Activated CD4-positive, alpha-beta T cell treated with anti-CD3 and anti-CD28 coated beads for 36 hours (primary cell): ENCODE measurements at regions of chr12 and their contacts with region 1.

Region 1: GRCh38 chr12:89949457-89950195 is 241.0 kb upstream of the ATP2B1 start:
- DNase-seq: peak; percentile 51
- ATAC-seq: peak; percentile 82
- H3K4me3 Mint-ChIP-seq: no peak overlapping the region
- H3K27ac Mint-ChIP-seq: peak overlapping the region; percentile 64
- H3K4me1 Mint-ChIP-seq: peaks cover 50% of the 10 kb centered on the region
- H3K27me3 Mint-ChIP-seq: no peaks in the 10 kb centered on the region

Region 2: GRCh38 chr12:88241862-88242570 is 1707.6 kb before region 1 on chr12:
- CTCF ChIA-PET with region 1: no interaction called
- POLR2A ChIA-PET with region 1: no interaction called
- intact Hi-C with region 1: loop called in 1 of 2 experiments (anchors 5 kb)
- DNase-seq: peak; percentile 57
- ATAC-seq: peak; percentile 95
- H3K4me3 Mint-ChIP-seq: no peak overlapping the region
- H3K27ac Mint-ChIP-seq: peak overlapping the region; percentile 91
- H3K4me1 Mint-ChIP-seq: peaks cover 36% of the 10 kb centered on the region
- H3K27me3 Mint-ChIP-seq: peaks cover 13% of the 10 kb centered on the region

Region 3: GRCh38 chr12:89280833-89281538 is 668.6 kb before region 1 on chr12:
- CTCF ChIA-PET with region 1: no interaction called
- POLR2A ChIA-PET with region 1: no interaction called
- intact Hi-C with region 1: no loop called
- DNase-seq: no peak
- ATAC-seq: peak; percentile 55
- H3K4me3 Mint-ChIP-seq: no peak overlapping the region
- H3K27ac Mint-ChIP-seq: peak overlapping the region; percentile 88
- H3K4me1 Mint-ChIP-seq: peaks cover 33% of the 10 kb centered on the region
- H3K27me3 Mint-ChIP-seq: no peaks in the 10 kb centered on the region

Region 4: DNA sequence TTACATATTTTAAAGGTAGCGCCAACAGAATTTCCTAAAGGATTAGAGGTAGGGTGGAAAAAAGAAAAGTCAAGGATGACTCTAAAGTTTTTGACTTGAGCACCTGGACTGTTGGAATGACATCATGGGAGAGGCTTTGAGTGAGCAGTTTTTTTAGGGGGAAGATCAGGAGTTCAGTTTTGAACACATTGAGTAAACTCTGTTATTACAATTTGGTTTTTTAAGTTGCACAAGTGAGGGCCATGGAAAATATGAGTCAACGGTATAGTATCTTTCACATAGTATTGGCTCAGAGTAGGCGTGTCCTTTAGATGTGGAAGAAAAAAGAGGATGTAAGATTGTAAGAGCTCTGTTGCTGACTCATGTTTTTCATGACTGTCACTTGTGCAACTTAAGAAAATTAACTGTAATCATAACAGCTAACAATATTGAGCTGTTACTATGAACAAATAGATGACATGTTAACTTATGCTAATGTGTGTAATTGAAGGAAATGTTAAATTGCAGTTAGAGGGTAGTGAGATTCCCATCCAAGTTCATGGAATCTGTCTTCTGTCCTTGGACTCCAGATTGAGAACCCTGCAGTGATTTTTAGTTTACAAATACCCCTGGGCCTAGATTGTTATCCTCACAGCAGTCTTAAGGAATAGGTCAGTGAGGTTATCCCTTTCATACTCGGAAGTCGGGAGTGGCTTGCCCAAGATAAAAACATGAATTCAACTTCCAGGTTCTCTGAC is 192.9 kb before region 1 on chr12:
- CTCF ChIA-PET with region 1: interaction called, 3 read pairs
- POLR2A ChIA-PET with region 1: no interaction called
- intact Hi-C with region 1: loop called (anchors 1 to 5 kb)
- DNase-seq: peak; percentile 28
- ATAC-seq: peak; percentile 94
- H3K4me3 Mint-ChIP-seq: peak overlapping the region; percentile 22
- H3K27ac Mint-ChIP-seq: peak overlapping the region; percentile 72
- H3K4me1 Mint-ChIP-seq: peaks cover 37% of the 10 kb centered on the region
- H3K27me3 Mint-ChIP-seq: no peaks in the 10 kb centered on the region

Region 5: DNA sequence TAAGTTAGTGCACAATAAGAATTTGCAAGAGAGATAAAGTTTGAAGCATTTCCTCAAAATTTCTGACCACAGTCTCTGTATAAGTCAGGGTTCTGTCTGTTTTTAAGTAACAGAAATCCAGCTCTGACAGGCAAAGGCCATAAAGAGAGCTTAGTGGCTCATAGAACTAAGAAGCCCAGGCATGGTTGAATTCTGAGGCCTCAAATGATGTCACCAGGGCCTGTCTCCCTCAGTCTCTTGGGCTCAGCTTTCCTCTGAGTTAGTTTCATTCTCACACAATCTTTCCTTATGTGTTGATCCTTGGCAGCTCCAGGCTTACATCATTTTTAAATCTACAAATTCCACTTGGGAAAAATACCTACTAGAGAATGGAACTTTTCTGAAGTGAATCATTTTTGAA is 67.6 kb before region 1 on chr12:
- CTCF ChIA-PET with region 1: no interaction called
- POLR2A ChIA-PET with region 1: no interaction called
- intact Hi-C with region 1: loop called (anchors 1 to 5 kb)
- DNase-seq: peak; percentile 45
- ATAC-seq: peak; percentile 67
- H3K4me3 Mint-ChIP-seq: no peak overlapping the region
- H3K27ac Mint-ChIP-seq: peak overlapping the region; percentile 83
- H3K4me1 Mint-ChIP-seq: peaks cover 38% of the 10 kb centered on the region
- H3K27me3 Mint-ChIP-seq: no peaks in the 10 kb centered on the region

Region 6: GRCh38 chr12:89907659-89908058 is 42.0 kb before region 1 on chr12:
- CTCF ChIA-PET with region 1: no interaction called
- POLR2A ChIA-PET with region 1: no interaction called
- intact Hi-C with region 1: no loop called
- DNase-seq: no peak
- ATAC-seq: no peak
- H3K4me3 Mint-ChIP-seq: no peak overlapping the region
- H3K27ac Mint-ChIP-seq: no peak overlapping the region
- H3K4me1 Mint-ChIP-seq: no peaks in the 10 kb centered on the region
- H3K27me3 Mint-ChIP-seq: no peaks in the 10 kb centered on the region

Region 7: DNA sequence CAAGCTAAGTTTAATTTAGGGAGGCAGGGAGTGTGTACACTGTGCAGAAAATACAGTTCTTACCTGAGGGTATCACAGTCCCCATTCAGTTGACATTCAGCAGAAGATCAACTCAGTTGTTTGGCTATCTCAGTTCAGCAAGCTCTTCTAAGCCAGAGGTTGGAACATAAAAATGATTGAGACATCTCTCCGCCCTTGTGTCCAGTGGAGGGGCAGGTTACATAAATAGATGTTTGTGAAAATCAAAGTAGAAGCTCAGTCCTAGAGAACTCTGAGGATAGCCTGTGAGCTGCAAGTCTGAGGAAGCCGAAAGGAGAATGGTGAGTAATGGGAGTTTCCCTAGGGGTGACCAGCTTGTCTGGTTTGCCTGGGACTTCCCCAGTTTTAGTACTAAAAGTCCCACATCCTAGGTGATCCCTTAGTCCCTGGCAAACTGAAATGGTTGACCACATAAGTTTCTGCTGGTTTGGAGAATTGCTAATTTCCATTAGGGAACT is 10.4 kb after region 1 on chr12:
- CTCF ChIA-PET with region 1: interaction called, 4 read pairs
- POLR2A ChIA-PET with region 1: interaction called, 4 read pairs
- intact Hi-C with region 1: loop called in 1 of 2 experiments (anchors 1 kb)
- DNase-seq: peak; percentile 47
- ATAC-seq: peak; percentile 97
- H3K4me3 Mint-ChIP-seq: no peak overlapping the region
- H3K27ac Mint-ChIP-seq: no peak overlapping the region
- H3K4me1 Mint-ChIP-seq: peaks cover 17% of the 10 kb centered on the region
- H3K27me3 Mint-ChIP-seq: no peaks in the 10 kb centered on the region

Region 8: DNA sequence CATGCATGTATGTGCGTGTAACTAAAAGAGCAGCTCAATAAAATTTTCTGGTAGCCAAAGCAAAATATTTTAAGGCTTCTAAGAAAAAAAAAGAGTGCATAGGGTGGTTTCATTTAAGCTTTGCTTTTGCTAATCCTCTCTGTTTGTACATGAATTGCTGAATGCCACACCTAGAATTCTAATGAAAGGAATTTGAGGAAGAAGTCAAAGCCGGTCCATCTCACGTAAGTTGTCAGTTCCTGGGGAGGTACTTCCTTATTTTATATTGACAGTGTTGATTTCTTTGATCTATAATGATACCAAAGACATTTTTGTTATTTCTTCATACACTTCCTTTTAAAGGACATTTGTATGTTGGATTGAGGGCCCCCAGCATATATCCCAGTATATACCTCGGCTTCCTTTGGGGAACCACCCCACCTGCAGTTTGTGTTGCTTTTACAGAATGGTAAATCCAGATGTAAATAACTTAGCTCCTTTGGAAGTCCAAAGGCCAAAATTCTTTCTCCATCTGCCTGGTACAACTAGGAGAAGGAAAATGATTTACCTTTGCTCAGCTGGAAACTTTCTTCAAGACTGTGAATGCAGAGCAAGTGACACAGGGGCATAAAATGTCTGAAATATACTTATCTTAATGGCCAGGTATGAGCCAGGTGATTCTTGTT is 179.9 kb after region 1 on chr12:
- CTCF ChIA-PET with region 1: no interaction called
- POLR2A ChIA-PET with region 1: no interaction called
- intact Hi-C with region 1: no loop called
- DNase-seq: no peak
- ATAC-seq: no peak
- H3K4me3 Mint-ChIP-seq: no peak overlapping the region
- H3K27ac Mint-ChIP-seq: no peak overlapping the region
- H3K4me1 Mint-ChIP-seq: no peaks in the 10 kb centered on the region
- H3K27me3 Mint-ChIP-seq: no peaks in the 10 kb centered on the region

Region 9: GRCh38 chr12:90280564-90281058 is 331.0 kb after region 1 on chr12:
- CTCF ChIA-PET with region 1: no interaction called
- POLR2A ChIA-PET with region 1: no interaction called
- intact Hi-C with region 1: loop called in 1 of 2 experiments (anchors 1 kb)
- DNase-seq: peak; percentile 33
- ATAC-seq: peak; percentile 74
- H3K4me3 Mint-ChIP-seq: no peak overlapping the region
- H3K27ac Mint-ChIP-seq: peak overlapping the region; percentile 11
- H3K4me1 Mint-ChIP-seq: peaks cover 28% of the 10 kb centered on the region
- H3K27me3 Mint-ChIP-seq: peaks cover 16% of the 10 kb centered on the region